Caco-2 (cell line): ENCODE measurements at regions of chr11 and their contacts with region 1.

Region 1: GRCh38 chr11:63527667-63528066 is 8.9 kb upstream of the PLAAT4 start:
- DNase-seq: peak in 1 of 2 experiments; percentile 26
- H3K4me3 ChIP-seq: peak overlapping the region; percentile 45
- H3K4me3 Mint-ChIP-seq: peak overlapping the region; percentile 72
- H3K27ac Mint-ChIP-seq: peak overlapping the region; percentile 98
- H3K4me1 ChIP-seq: peaks cover 61% of the 10 kb centered on the region
- H3K4me1 Mint-ChIP-seq: peaks cover 45% of the 10 kb centered on the region
- H3K27me3 ChIP-seq: no peaks in the 10 kb centered on the region
- H3K27me3 Mint-ChIP-seq: no peaks in the 10 kb centered on the region
- CTCF ChIP-seq: no peak

Region 2: GRCh38 chr11:63621931-63622782 is 94.5 kb after region 1 on chr11:
- CTCF ChIA-PET with region 1: no interaction called
- POLR2A ChIA-PET with region 1: no interaction called
- intact Hi-C with region 1: loop called (anchors 5 kb)
- DNase-seq: peak; percentile 77 to 86
- H3K4me3 ChIP-seq: no peak overlapping the region
- H3K4me3 Mint-ChIP-seq: no peak overlapping the region
- H3K27ac Mint-ChIP-seq: peak overlapping the region; percentile 69
- H3K4me1 ChIP-seq: peaks cover 53% of the 10 kb centered on the region
- H3K4me1 Mint-ChIP-seq: peaks cover 41% of the 10 kb centered on the region
- H3K27me3 ChIP-seq: no peaks in the 10 kb centered on the region
- H3K27me3 Mint-ChIP-seq: no peaks in the 10 kb centered on the region
- CTCF ChIP-seq: no peak

Region 3: GRCh38 chr11:63719977-63720376 is 192.3 kb after region 1 on chr11:
- CTCF ChIA-PET with region 1: no interaction called
- POLR2A ChIA-PET with region 1: no interaction called
- intact Hi-C with region 1: no loop called
- DNase-seq: no peak
- H3K4me3 ChIP-seq: no peak overlapping the region
- H3K4me3 Mint-ChIP-seq: no peak overlapping the region
- H3K27ac Mint-ChIP-seq: no peak overlapping the region
- H3K4me1 ChIP-seq: no peaks in the 10 kb centered on the region
- H3K4me1 Mint-ChIP-seq: peaks cover 1% of the 10 kb centered on the region
- H3K27me3 ChIP-seq: no peaks in the 10 kb centered on the region
- H3K27me3 Mint-ChIP-seq: no peaks in the 10 kb centered on the region
- CTCF ChIP-seq: no peak